Activated naive CD4-positive, alpha-beta T cell treated with anti-CD3 and anti-CD28 coated beads, Interleukin-2, amount 10 ng/mL, durations not matched to agents 7 days and 5 days (primary cell): ENCODE measurements at regions of chr6 and their contacts with region 1.

Region 1: DNA sequence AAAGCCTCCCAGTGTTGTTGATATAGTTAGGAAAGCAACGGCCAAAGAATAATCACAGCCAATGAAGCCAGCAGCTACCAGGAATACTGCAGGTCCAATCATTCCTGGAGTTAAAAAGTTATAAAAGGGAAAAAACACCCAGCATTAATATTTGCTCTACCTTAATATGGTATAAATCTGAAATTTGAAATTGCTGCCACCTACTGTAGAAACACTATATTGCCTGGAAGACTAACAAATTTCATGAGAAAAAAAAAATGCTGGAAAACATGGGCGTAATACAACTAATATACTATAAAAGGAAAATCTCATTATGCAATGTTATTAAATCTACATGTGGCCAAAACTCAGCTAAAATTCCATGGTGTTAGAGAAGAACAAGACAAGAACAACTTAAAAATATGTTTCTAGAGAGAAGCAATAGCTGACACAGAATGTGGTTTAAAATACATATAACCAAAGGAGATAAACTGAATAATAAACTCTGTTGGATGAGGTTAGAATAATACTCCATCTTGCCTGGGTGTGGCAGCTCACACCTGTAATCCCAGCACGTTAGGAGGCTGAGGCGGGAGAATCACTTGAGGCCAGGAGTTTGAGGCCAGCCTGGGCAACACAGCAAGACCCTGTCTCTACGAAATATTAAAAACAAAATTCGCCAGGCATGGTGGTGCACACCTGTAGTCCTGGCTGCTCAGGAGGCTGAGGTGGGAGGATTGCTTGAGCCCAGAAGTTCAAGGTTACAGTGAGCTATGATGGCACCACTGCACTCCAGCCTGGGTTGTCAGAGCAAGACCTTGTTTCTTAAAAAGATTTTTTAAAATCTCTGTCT is 43.1 kb downstream of the SLC17A5 start:
- DNase-seq: no peak
- H3K4me3 Mint-ChIP-seq: no peak overlapping the region
- H3K27ac Mint-ChIP-seq: no peak overlapping the region
- H3K4me1 Mint-ChIP-seq: no peaks in the 10 kb centered on the region
- H3K27me3 Mint-ChIP-seq: no peaks in the 10 kb centered on the region

Region 2: DNA sequence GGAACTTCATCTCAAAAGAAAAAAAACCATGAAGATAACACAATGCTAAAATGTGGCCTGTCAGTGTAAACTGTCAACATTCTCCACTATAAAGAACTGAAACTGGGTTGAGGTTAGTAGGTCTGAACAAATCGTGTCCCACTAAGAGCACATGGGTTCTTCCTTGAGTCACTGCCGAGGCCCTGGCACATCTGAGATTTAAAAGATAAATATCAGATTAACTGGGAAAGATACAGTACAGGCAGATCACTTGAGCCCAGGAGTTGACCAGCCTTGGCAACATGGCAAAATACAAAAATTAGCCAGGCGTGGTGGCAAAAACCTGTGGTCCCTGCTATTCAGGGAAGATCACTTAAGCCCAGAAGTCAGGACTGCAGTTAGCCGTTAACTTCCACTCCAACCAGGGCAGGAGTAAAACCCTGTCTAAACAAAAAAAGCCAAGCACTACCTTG is 95.4 kb before region 1 on chr6:
- CTCF ChIA-PET with region 1: interaction called, 41 read pairs
- DNase-seq: no peak
- H3K4me3 Mint-ChIP-seq: no peak overlapping the region
- H3K27ac Mint-ChIP-seq: peak overlapping the region; percentile 86
- H3K4me1 Mint-ChIP-seq: peaks cover 49% of the 10 kb centered on the region
- H3K27me3 Mint-ChIP-seq: peaks cover 4% of the 10 kb centered on the region

Region 3: GRCh38 chr6:73520688-73521350 is 89.8 kb before region 1 on chr6 and contains the start of gene EEF1A1:
- CTCF ChIA-PET with region 1: interaction called, 41 read pairs
- DNase-seq: peak; percentile 100
- H3K4me3 Mint-ChIP-seq: peak within 1 kb of the TSS; percentile 88
- H3K27ac Mint-ChIP-seq: peak within 1 kb of the TSS; percentile 98
- H3K4me1 Mint-ChIP-seq: peaks cover 59% of the 10 kb centered on the region
- H3K27me3 Mint-ChIP-seq: peaks cover 11% of the 10 kb centered on the region

Region 4: GRCh38 chr6:73665686-73666319 is 55.1 kb after region 1 on chr6:
- CTCF ChIA-PET with region 1: no interaction called
- DNase-seq: no peak
- H3K4me3 Mint-ChIP-seq: no peak overlapping the region
- H3K27ac Mint-ChIP-seq: no peak overlapping the region
- H3K4me1 Mint-ChIP-seq: no peaks in the 10 kb centered on the region
- H3K27me3 Mint-ChIP-seq: peaks cover 15% of the 10 kb centered on the region